Lower leg skin (tissue), 4 donors: ENCODE measurements at regions of chr1 and their contacts with region 1.

Region 1: GRCh38 chr1:26321315-26322041 is 3.7 kb downstream of the CD52 start:
- DNase-seq: peak; percentile 93 to 99
- H3K4me3 ChIP-seq: no peak overlapping the region
- CTCF ChIP-seq: peak in 2 of 3 donors; percentile 52 to 80
- POLR2A ChIP-seq: no peak

Region 2: DNA sequence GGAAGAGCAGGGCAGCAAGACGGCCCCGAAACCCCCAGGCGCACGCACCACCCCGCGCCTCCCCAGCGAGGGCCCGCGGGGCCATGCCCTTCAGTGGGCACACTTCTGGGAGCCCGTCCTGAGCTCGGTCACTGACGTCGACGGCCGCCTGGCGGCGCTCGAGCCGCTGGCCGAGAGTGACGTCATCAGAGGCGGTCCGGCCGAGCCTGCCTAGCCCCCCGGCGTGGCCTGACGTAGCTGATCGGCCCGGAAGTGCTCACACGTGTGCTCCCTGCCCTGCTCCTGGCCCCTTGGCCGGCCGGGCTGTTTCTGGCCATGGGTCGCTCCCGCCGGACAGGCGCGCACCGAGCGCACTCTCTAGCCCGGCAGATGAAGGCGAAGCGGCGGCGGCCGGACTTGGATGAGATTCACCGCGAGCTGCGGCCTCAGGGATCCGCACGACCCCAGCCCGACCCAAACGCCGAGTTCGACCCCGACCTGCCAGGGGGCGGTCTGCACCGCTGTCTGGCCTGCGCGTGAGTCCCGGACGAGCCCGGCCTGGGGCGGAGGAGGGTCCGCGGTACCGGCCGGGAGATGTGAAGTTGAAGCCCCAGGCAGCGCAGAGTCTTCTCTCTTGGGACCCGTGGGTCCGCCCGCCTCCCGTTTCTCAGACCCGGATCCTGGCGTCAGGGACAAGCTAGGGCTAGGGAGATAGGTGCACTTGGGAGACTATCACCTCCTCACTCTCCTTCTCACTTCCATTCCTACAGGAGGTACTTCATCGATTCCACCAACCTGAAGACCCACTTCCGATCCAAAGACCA is 151.6 kb before region 1 on chr1 and contains the start of gene ZNF593:
- intact Hi-C with region 1: loop called (anchors 10 kb)
- DNase-seq: peak; percentile 84 to 98
- H3K4me3 ChIP-seq: peak within 1 kb of the TSS; percentile 84
- CTCF ChIP-seq: peak in 1 of 3 donors; percentile 89
- POLR2A ChIP-seq: no peak
- total RNA-seq, gene ZNF593: 17.4 to 49.3 (median 31.4) TPM

Region 3: GRCh38 chr1:26279456-26280332 is 41.8 kb before region 1 on chr1 and contains the start of gene SH3BGRL3:
- intact Hi-C with region 1: loop called (anchors 2 kb)
- DNase-seq: peak; percentile 85 to 98
- H3K4me3 ChIP-seq: peak within 1 kb of the TSS; percentile 75
- CTCF ChIP-seq: no peak
- POLR2A ChIP-seq: peak in 1 of 2 donors; percentile 48
- total RNA-seq, gene SH3BGRL3: 74.8 to 97.1 (median 78.3) TPM

Region 4: DNA sequence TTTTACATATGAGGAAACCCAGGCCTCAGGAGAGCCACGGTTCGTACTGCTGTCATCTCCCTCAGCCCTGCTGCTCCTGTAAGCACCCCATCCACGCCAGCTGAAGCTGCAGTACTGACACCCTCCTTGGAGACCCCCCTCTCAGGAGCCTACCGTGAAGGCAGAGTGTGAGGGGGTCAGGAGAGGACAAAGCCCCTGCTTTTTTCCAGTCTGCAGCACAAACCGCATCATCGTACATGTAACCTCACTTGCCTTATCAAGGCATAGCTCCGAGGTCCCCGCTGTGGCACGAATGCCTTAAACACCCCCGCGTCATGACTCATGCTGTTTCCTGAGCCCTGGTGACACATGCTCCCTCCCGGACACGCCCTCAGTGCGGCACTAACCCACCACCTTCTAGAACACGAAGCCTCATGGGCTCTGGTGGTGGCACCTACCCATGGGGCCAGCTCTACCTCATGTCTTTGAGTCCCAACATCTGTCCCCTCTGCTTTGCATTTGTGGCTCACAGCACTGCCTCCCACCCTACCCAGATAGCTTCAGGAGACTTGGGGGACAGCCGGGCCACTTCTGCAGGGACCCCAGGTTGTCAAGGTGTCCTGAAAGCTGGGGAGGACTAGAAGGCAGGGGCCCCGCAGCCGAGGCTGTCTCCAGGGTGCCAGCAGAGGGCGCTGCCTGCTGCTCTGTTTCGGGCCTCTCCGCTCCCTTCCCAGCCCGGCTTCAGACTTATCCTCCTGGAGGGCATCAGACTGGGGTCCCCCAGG is 36.7 kb before region 1 on chr1:
- intact Hi-C with region 1: loop called (anchors 5 kb)
- DNase-seq: peak; percentile 90 to 97
- H3K4me3 ChIP-seq: no peak overlapping the region
- CTCF ChIP-seq: no peak
- POLR2A ChIP-seq: no peak

Region 5: GRCh38 chr1:26417111-26417759 is 95.8 kb after region 1 on chr1:
- intact Hi-C with region 1: loop called (anchors 10 kb)
- DNase-seq: peak; percentile 64 to 92
- H3K4me3 ChIP-seq: no peak overlapping the region
- CTCF ChIP-seq: no peak
- POLR2A ChIP-seq: no peak